Esophagus muscularis mucosa (tissue), 4 donors: ENCODE measurements at regions of chr14 and their contacts with region 1.

Region 1: DNA sequence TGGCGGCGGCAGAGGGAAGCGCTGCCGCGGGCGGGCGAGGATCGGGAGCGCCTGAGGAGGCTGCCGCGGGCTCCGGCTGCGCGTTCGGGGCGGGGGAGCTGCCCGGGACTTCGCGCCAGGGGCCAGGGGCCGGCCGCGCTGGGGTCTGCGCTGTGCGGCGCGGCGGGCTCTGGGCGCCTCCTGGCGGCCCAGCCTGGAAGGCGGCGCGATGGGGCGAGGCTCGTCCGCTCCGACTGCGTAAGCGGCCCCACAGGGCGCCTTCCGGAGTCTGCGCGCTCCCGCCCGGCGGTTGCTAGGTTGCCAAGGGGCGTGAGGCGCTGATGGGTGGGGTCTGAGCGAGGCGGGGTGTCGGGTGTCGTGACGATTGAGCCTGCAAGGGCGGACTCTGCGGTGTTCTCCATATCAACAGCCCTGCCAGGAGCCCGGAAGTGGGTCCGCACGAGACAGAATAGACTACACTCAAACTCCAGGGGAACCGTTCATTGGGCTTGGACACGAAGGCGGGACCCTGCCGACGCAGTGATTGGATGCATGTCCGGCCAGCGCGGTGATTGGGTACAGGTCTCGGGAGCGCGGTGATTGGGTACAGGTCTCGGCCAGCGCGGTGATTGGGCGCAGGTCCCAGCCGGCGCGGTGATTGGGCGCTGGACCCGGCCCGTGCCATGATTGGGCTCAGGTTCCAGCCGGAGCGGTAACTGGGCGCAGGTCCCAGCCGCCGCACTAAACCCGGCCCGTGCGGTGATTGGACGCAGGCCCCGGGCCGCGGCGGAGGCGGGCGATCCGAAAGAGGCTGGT is at the start of gene TEDC1:
- DNase-seq: peak; percentile 100
- H3K4me3 ChIP-seq: peak within 1 kb of the TSS; percentile 68 to 75 (median 74)
- H3K27ac ChIP-seq: peak within 1 kb of the TSS; percentile 93 to 99 (median 96)
- H3K4me1 ChIP-seq: peaks cover 55 to 68% (median 58%) of the 10 kb centered on the region in 4 donors
- H3K27me3 ChIP-seq: peaks cover 0 to 14% (median 0%) of the 10 kb centered on the region in 4 donors
- CTCF ChIP-seq: peak; percentile 88 to 96 (median 96)
- EP300 ChIP-seq: no peak
- POLR2A ChIP-seq: no peak
- total RNA-seq, gene TEDC1: 3.8 to 6.6 (median 4.7) TPM

Region 2: GRCh38 chr14:105351920-105352851 is 138.6 kb before region 1 on chr14:
- intact Hi-C with region 1: no loop called
- DNase-seq: peak; percentile 95
- H3K4me3 ChIP-seq: no peak overlapping the region
- H3K27ac ChIP-seq: no peak overlapping the region
- H3K4me1 ChIP-seq: peaks cover 5 to 26% (median 16%) of the 10 kb centered on the region in 4 donors
- H3K27me3 ChIP-seq: no peaks in the 10 kb centered on the region
- CTCF ChIP-seq: peak; percentile 70 to 89 (median 78)
- EP300 ChIP-seq: no peak
- POLR2A ChIP-seq: no peak

Region 3: GRCh38 chr14:105369653-105370040 is 121.1 kb before region 1 on chr14:
- intact Hi-C with region 1: loop called (anchors 2 kb)
- DNase-seq: no peak
- H3K4me3 ChIP-seq: no peak overlapping the region
- H3K27ac ChIP-seq: no peak overlapping the region
- H3K4me1 ChIP-seq: peaks cover 3 to 13% (median 7%) of the 10 kb centered on the region in 4 donors
- H3K27me3 ChIP-seq: no peaks in the 10 kb centered on the region
- CTCF ChIP-seq: no peak
- EP300 ChIP-seq: no peak
- POLR2A ChIP-seq: no peak

Region 4: GRCh38 chr14:105414456-105415371 is 76.1 kb before region 1 on chr14:
- intact Hi-C with region 1: no loop called
- DNase-seq: no peak
- H3K4me3 ChIP-seq: peak overlapping the region; percentile 59 to 67 (median 64)
- H3K27ac ChIP-seq: peak overlapping the region; percentile 79 to 83 (median 80)
- H3K4me1 ChIP-seq: peaks cover 25 to 48% (median 39%) of the 10 kb centered on the region in 4 donors
- H3K27me3 ChIP-seq: peaks cover 0 to 34% (median 8%) of the 10 kb centered on the region in 4 donors
- CTCF ChIP-seq: peak; percentile 79 to 91 (median 82)
- EP300 ChIP-seq: no peak
- POLR2A ChIP-seq: no peak

Region 5: DNA sequence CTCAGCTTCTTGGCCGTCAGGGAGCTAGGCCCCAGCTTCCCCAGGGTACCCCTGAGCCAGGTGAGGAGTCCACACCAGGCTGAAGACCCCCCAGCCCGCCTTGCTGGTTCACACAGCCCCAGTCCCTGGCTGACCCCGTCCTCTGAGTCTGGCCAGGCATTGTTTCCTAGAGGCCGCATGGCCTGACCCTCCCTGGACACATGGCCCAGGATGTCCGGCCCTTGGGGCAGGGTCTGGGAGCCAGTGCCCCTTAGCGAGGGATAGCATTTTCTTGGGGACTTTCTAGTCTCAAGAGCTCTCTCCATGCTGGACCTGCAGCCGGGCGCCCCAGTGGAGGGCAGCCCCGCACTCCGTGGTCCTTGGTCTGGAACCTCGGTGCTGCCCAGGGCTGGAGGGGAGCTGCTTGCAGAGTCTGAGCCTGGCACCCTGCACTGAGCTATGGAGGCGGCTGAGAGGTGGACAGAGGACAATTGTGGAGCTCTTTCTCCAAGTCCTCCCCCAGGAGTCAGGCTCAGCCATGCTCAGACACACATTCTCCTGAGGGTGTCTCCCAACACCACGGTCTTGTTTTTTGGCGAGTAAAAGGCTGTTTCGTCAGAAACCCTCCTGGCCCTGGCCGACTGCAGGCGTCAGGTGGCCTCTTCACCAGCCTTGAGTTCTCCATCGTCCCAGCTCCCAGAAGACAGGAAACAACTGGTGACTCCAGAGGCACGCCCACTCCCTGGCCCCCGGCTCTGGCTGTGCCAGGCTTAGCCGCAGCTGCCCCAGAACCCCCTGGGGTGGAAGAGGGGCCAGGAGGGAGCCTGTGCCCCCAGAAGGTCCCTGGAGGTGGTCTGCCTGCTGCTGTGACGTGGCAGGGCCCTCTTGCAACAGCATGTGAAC is 33.8 kb before region 1 on chr14:
- intact Hi-C with region 1: no loop called
- DNase-seq: no peak
- H3K4me3 ChIP-seq: no peak overlapping the region
- H3K27ac ChIP-seq: no peak overlapping the region
- H3K4me1 ChIP-seq: no peaks in the 10 kb centered on the region
- H3K27me3 ChIP-seq: no peaks in the 10 kb centered on the region
- CTCF ChIP-seq: no peak
- EP300 ChIP-seq: no peak
- POLR2A ChIP-seq: no peak

Region 6: DNA sequence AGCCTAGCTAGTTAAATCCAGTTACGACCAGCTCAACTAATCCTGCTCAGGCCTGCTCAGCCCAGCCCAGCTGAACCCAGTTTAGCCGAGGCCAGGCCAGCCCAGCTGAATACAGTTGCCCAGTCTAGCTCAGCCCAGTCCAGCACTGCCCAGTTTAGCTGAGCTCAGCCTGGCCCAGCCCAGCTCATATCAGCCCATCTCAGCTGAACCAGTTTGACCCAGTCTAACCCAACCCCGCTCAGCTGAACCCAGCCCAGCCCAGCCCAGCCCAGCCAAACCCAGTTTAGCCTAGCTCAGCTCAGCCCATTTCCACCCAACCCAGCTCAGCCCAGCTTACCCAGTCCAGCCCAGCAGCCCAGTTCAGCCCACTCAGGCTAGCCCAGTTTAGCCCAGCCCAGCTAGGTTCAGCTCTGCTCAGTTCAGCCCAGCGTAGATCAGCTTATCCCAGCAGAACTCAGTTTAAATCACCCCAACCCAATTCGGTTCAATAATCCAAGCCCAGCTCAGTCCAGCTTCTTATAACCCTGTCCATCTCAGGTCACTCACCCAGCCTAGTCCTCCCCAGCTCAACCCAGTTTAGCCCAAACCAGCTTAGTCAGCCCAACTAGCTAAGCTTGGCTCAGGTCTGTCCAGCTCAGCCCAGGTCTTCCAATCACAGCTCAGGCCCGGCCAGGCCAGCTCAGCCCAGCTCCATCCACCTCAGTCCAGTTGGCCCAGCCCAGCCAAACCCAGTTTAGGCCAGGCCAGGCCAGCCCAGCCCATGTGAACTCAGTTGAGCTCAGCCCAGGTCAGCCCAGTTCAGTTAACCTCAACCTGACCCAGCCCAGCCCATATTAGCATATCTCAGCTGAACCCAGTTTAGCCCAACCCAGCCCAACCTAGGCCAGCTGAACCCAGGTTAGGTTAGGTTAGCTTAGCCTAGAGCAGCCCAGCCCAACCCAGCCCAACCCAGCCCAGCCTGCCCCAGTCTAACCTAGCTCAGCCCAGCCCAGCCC is 112.3 kb after region 1 on chr14:
- intact Hi-C with region 1: no loop called
- DNase-seq: peak; percentile 83
- H3K4me3 ChIP-seq: no peak overlapping the region
- H3K27ac ChIP-seq: no peak overlapping the region
- H3K4me1 ChIP-seq: no peaks in the 10 kb centered on the region
- H3K27me3 ChIP-seq: peaks cover 0 to 6% (median 0%) of the 10 kb centered on the region in 4 donors
- CTCF ChIP-seq: no peak
- EP300 ChIP-seq: no peak
- POLR2A ChIP-seq: no peak